Activated CD4-positive, alpha-beta memory T cell treated with anti-CD3 and anti-CD28 coated beads for 36 hours (primary cell): ENCODE measurements at regions of chr1 and their contacts with region 1.

Region 1: GRCh38 chr1:61077676-61078541 is 4.5 kb upstream of the NFIA start:
- DNase-seq: peak; percentile 93
- H3K4me3 Mint-ChIP-seq: peak overlapping the region; percentile 89
- H3K27ac Mint-ChIP-seq: peak overlapping the region; percentile 86
- H3K4me1 Mint-ChIP-seq: peaks cover 44% of the 10 kb centered on the region
- H3K27me3 Mint-ChIP-seq: peaks cover 5% of the 10 kb centered on the region

Region 2: GRCh38 chr1:59814180-59814900 is 1263.6 kb before region 1 on chr1:
- CTCF ChIA-PET with region 1: no interaction called
- POLR2A ChIA-PET with region 1: no interaction called
- intact Hi-C with region 1: loop called (anchors 10 kb)
- DNase-seq: peak; percentile 92
- H3K4me3 Mint-ChIP-seq: peak overlapping the region; percentile 80
- H3K27ac Mint-ChIP-seq: peak overlapping the region; percentile 75
- H3K4me1 Mint-ChIP-seq: peaks cover 7% of the 10 kb centered on the region
- H3K27me3 Mint-ChIP-seq: peaks cover 5% of the 10 kb centered on the region

Region 3: GRCh38 chr1:61270761-61271411 is 193.0 kb after region 1 on chr1:
- CTCF ChIA-PET with region 1: interaction called, 6 read pairs
- POLR2A ChIA-PET with region 1: interaction called, 16 read pairs
- intact Hi-C with region 1: loop called (anchors 1 kb)
- DNase-seq: peak; percentile 58
- H3K4me3 Mint-ChIP-seq: peak overlapping the region; percentile 26
- H3K27ac Mint-ChIP-seq: peak overlapping the region; percentile 86
- H3K4me1 Mint-ChIP-seq: peaks cover 53% of the 10 kb centered on the region
- H3K27me3 Mint-ChIP-seq: peaks cover 5% of the 10 kb centered on the region

Region 4: GRCh38 chr1:61318319-61319125 is 240.6 kb after region 1 on chr1:
- CTCF ChIA-PET with region 1: no interaction called
- POLR2A ChIA-PET with region 1: interaction called, 6 read pairs
- intact Hi-C with region 1: loop called (anchors 1 kb)
- DNase-seq: peak; percentile 44
- H3K4me3 Mint-ChIP-seq: peak overlapping the region; percentile 42
- H3K27ac Mint-ChIP-seq: peak overlapping the region; percentile 88
- H3K4me1 Mint-ChIP-seq: peaks cover 48% of the 10 kb centered on the region
- H3K27me3 Mint-ChIP-seq: peaks cover 2% of the 10 kb centered on the region

Region 5: GRCh38 chr1:61724813-61725694 is 647.1 kb after region 1 on chr1 and contains the start of gene TM2D1:
- CTCF ChIA-PET with region 1: interaction called, 3 read pairs
- POLR2A ChIA-PET with region 1: no interaction called
- intact Hi-C with region 1: loop called (anchors 5 kb)
- DNase-seq: peak; percentile 93
- H3K4me3 Mint-ChIP-seq: peak within 1 kb of the TSS; percentile 98
- H3K27ac Mint-ChIP-seq: peak within 1 kb of the TSS; percentile 99
- H3K4me1 Mint-ChIP-seq: peaks cover 18% of the 10 kb centered on the region
- H3K27me3 Mint-ChIP-seq: no peaks in the 10 kb centered on the region
- total RNA-seq, gene TM2D1: 29.7 to 34.3 TPM